GM12878 (cell line): ENCODE measurements at regions of chr9 and their contacts with region 1.

Region 1: GRCh38 chr9:93108291-93109041 is 12.4 kb downstream of the CARD19 start:
- DNase-seq: no peak
- ATAC-seq: peak; percentile 76
- H3K4me3 ChIP-seq: no peak overlapping the region
- H3K27ac ChIP-seq: no peak overlapping the region
- H3K4me1 ChIP-seq: peaks cover 12% of the 10 kb centered on the region
- H3K27me3 ChIP-seq: no peaks in the 10 kb centered on the region
- CTCF ChIP-seq: no peak
- EP300 ChIP-seq: no peak
- POLR2A ChIP-seq: no peak
- RAD21 ChIP-seq: no peak

Region 2: DNA sequence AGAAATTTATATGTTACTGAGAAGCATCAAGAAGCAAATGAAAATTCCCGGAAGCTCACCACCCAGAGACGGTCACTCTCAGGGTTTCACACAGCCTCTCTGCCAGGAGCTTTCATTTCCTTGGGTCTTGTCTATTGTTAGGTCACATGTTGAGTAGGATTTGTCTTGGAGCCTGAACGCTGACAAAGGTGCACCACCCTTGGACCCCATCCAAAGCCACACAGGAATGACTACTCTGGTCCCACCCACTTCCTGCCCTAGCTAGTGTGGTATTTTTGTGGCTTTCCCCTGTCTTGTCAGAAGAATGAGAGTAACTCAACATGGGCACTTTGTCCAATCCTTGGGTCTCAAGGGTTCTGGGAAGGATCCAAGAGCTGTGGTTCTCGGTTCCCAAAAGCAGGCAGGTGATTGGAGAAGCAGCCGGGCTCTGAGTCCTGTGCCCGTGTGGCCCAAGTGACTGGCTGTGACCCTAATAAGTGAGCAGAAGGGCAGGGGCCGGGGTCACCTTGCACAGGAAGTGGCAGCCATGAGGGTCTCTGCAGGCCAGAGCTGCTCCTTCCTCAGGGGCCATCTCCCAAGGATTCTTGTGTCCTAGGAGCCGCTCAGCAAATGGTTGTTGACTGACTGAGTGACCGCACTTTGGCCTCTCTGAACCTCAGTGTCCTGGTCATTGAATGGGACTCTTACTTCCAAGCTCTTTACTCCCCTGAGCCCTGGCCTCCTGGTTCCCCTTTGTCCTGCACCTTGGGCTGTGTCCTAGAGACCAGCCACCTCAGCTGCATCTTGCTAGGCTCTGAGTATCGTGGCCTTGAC is 154.2 kb before region 1 on chr9:
- CTCF ChIA-PET with region 1: interaction called, 60 read pairs
- POLR2A ChIA-PET with region 1: no interaction called
- RAD21 ChIA-PET with region 1: interaction called, 8 read pairs
- SMC1A ChIA-PET with region 1: interaction called, 10 read pairs
- in situ Hi-C with region 1: no loop called
- intact Hi-C with region 1: loop called (anchors 1 kb)
- DNase-seq: peak; percentile 61
- ATAC-seq: peak; percentile 79
- H3K4me3 ChIP-seq: peak overlapping the region; percentile 3; the same call in 1 of the 2 replicates
- H3K27ac ChIP-seq: 0 out of 2 replicates have a peak overlapping the region, but pooled peaks have one; percentile 9
- H3K4me1 ChIP-seq: peaks cover 13% of the 10 kb centered on the region
- H3K27me3 ChIP-seq: peaks cover 1 to 5% of the 10 kb centered on the region in 2 experiments; a peak in 3 of 4 replicates
- CTCF ChIP-seq: no peak
- EP300 ChIP-seq: no peak
- POLR2A ChIP-seq: no peak
- RAD21 ChIP-seq: no peak

Region 3: GRCh38 chr9:93058355-93059096 is 49.9 kb before region 1 on chr9 and contains the start of gene SUSD3:
- CTCF ChIA-PET with region 1: interaction called, 22 read pairs
- POLR2A ChIA-PET with region 1: no interaction called
- RAD21 ChIA-PET with region 1: interaction called, 7 read pairs
- SMC1A ChIA-PET with region 1: interaction called, 6 read pairs
- in situ Hi-C with region 1: no loop called
- intact Hi-C with region 1: no loop called
- DNase-seq: peak; percentile 60
- ATAC-seq: peak; percentile 77
- H3K4me3 ChIP-seq: peak within 1 kb of the TSS; percentile 81
- H3K27ac ChIP-seq: peak within 1 kb of the TSS; percentile 88
- H3K4me1 ChIP-seq: peaks cover 49% of the 10 kb centered on the region
- H3K27me3 ChIP-seq: no peaks in the 10 kb centered on the region
- CTCF ChIP-seq: no peak
- EP300 ChIP-seq: peak in 1 of 2 experiments; percentile 42; a peak in 2 of 4 replicates
- POLR2A ChIP-seq: peak; percentile 64
- RAD21 ChIP-seq: no peak
- polyA plus RNA-seq, gene SUSD3: 2.5 to 15.1 TPM

Region 4: DNA sequence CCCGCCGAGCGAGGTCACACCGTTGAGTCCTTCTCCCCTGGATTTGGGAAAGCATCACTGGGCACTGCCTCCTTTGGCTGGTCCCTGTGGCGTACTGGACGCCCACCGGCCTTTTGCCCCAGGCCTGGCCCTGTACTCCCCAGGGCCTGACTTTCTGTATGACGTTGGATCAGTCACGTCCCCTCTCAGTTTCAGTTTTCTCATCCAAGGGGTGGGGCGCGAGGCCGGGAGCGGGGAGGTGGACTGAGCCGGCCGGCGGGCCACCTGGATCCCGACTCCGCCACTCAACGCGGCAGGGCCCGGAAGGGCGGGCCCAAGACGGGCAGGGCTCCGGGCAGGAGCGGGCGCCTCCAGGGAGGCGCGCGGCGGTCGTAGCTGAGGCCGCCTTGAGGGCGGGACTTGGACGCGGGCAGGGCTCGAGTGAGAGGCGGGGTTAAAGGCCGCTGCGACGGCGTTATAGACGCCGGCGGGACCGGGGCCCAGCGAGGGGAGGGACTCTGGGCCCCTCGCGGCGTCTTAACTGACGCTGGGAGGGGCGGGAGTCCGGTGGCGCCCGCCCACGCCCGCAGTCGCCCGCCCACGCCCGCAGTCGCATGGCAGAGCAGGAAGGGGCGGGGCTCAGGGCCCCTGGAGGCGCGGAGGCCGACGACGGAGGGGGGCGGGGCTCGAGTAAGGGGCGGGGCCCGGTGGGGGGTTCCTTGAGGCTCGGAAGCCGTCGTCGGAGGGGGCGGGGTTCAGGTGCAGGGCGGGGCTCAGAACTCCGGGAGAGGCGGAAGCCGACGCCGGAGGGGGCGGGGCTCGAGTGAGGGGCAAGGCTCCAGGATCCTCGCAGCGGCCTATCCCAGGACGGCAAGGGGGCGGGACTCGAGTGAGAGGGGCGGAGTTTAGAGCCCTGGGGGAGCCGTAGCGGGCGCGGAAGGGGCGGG is 13.0 kb before region 1 on chr9:
- CTCF ChIA-PET with region 1: interaction called, 44 read pairs
- POLR2A ChIA-PET with region 1: interaction called, 11 read pairs
- RAD21 ChIA-PET with region 1: interaction called, 23 read pairs
- SMC1A ChIA-PET with region 1: interaction called, 28 read pairs
- in situ Hi-C with region 1: no loop called
- intact Hi-C with region 1: no loop called
- DNase-seq: peak; percentile 85
- ATAC-seq: peak; percentile 81
- H3K4me3 ChIP-seq: peak overlapping the region; percentile 54
- H3K27ac ChIP-seq: peak overlapping the region; percentile 99
- H3K4me1 ChIP-seq: peaks cover 61% of the 10 kb centered on the region
- H3K27me3 ChIP-seq: no peaks in the 10 kb centered on the region
- CTCF ChIP-seq: no peak
- EP300 ChIP-seq: no peak
- POLR2A ChIP-seq: peak; percentile 78
- RAD21 ChIP-seq: no peak

Region 5: GRCh38 chr9:93126825-93127368 is 18.4 kb after region 1 on chr9:
- CTCF ChIA-PET with region 1: interaction called, 16 read pairs
- POLR2A ChIA-PET with region 1: interaction called, 5 read pairs
- RAD21 ChIA-PET with region 1: interaction called, 21 read pairs
- SMC1A ChIA-PET with region 1: interaction called, 6 read pairs
- in situ Hi-C with region 1: no loop called
- intact Hi-C with region 1: no loop called
- DNase-seq: no peak
- ATAC-seq: no peak
- H3K4me3 ChIP-seq: no peak overlapping the region
- H3K27ac ChIP-seq: no peak overlapping the region
- H3K4me1 ChIP-seq: peaks cover 14% of the 10 kb centered on the region
- H3K27me3 ChIP-seq: no peaks in the 10 kb centered on the region
- CTCF ChIP-seq: no peak
- EP300 ChIP-seq: no peak
- POLR2A ChIP-seq: no peak
- RAD21 ChIP-seq: no peak

Region 6: GRCh38 chr9:93302551-93303257 is 194.2 kb after region 1 on chr9:
- CTCF ChIA-PET with region 1: interaction called, 16 read pairs
- POLR2A ChIA-PET with region 1: no interaction called
- RAD21 ChIA-PET with region 1: interaction called, 9 read pairs
- SMC1A ChIA-PET with region 1: interaction called, 5 read pairs
- in situ Hi-C with region 1: loop called (anchors 5 kb)
- intact Hi-C with region 1: loop called (anchors 1 kb)
- DNase-seq: no peak
- ATAC-seq: peak; percentile 90
- H3K4me3 ChIP-seq: no peak overlapping the region
- H3K27ac ChIP-seq: no peak overlapping the region
- H3K4me1 ChIP-seq: no peaks in the 10 kb centered on the region
- H3K27me3 ChIP-seq: no peaks in the 10 kb centered on the region; a peak in 1 of 4 replicates
- CTCF ChIP-seq: peak; percentile 50 to 61 (median 57); a peak in 5 of 6 replicates
- EP300 ChIP-seq: no peak
- POLR2A ChIP-seq: no peak
- RAD21 ChIP-seq: peak; percentile 63

Region 7: GRCh38 chr9:93962561-93963440 is 854.3 kb after region 1 on chr9:
- CTCF ChIA-PET with region 1: no interaction called
- POLR2A ChIA-PET with region 1: no interaction called
- RAD21 ChIA-PET with region 1: no interaction called
- SMC1A ChIA-PET with region 1: no interaction called
- in situ Hi-C with region 1: no loop called
- intact Hi-C with region 1: loop called (anchors 5 kb)
- DNase-seq: peak; percentile 11
- ATAC-seq: peak; percentile 91
- H3K4me3 ChIP-seq: no peak overlapping the region
- H3K27ac ChIP-seq: no peak overlapping the region
- H3K4me1 ChIP-seq: no peaks in the 10 kb centered on the region
- H3K27me3 ChIP-seq: peaks cover 14% of the 10 kb centered on the region in 2 experiments
- CTCF ChIP-seq: peak; percentile 71 to 83 (median 80)
- EP300 ChIP-seq: no peak
- POLR2A ChIP-seq: no peak
- RAD21 ChIP-seq: peak; percentile 79